ENCODE measurements at regions of chr11 and their contacts with region 1.

Region 1: GRCh38 chr11:59753650-59754493 is 1.3 kb upstream of the STX3 start:
- DNase-seq: peak; percentile 68
- ATAC-seq: peak; percentile 72
- H3K4me3 ChIP-seq: peak overlapping the region; percentile 77 to 93 (median 87)
- H3K27ac ChIP-seq: no peak overlapping the region
- H3K4me1 ChIP-seq: peaks cover 37% of the 10 kb centered on the region
- H3K27me3 ChIP-seq: no peaks in the 10 kb centered on the region; a peak in 1 of 5 replicates
- CTCF ChIP-seq: peak; percentile 91
- EP300 ChIP-seq: no peak
- POLR2A ChIP-seq: no peak
- RAD21 ChIP-seq: peak; percentile 81

Region 2: DNA sequence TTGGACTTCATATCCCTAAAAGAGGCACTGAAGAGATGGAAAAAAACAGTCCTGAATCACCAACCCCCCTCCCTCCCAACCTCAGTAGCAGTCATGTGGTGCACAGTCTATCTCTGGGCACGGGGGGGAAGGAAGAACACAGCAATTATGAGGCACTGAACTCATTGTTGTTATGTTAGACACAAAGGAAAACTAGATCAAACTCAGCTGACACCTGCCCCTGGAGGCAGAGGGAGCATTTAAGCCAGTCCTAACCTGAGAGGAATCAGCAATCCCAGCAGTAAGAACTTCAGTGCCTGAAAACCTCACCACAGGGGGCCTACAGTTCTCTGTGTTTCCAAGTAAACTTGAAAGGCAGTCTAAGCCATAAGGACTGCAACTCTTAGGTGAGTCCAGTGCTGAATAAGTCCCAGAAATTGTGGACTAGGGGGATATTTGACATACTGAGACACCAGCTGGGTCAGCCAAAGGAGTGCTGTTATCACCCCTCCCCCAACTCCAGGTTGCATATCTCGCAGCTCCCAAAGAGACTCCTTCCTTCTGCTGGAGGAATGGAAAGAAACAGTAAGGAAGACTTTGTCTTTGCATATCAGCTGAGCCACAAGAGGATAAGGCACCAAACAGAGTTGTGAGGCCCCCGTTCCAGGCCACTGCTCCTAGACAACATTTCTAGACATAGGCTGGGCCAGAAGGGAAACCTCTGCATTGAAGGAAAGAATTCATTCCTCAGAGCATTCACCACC is 742.0 kb before region 1 on chr11:
- CTCF ChIA-PET with region 1: no interaction called
- POLR2A ChIA-PET with region 1: no interaction called
- in situ Hi-C with region 1: no loop called
- intact Hi-C with region 1: no loop called
- DNase-seq: no peak
- ATAC-seq: no peak
- H3K4me3 ChIP-seq: no peak overlapping the region
- H3K27ac ChIP-seq: no peak overlapping the region
- H3K4me1 ChIP-seq: no peaks in the 10 kb centered on the region
- H3K27me3 ChIP-seq: no peaks in the 10 kb centered on the region; a peak in 1 of 5 replicates
- CTCF ChIP-seq: no peak
- EP300 ChIP-seq: no peak
- POLR2A ChIP-seq: no peak
- RAD21 ChIP-seq: no peak

Region 3: DNA sequence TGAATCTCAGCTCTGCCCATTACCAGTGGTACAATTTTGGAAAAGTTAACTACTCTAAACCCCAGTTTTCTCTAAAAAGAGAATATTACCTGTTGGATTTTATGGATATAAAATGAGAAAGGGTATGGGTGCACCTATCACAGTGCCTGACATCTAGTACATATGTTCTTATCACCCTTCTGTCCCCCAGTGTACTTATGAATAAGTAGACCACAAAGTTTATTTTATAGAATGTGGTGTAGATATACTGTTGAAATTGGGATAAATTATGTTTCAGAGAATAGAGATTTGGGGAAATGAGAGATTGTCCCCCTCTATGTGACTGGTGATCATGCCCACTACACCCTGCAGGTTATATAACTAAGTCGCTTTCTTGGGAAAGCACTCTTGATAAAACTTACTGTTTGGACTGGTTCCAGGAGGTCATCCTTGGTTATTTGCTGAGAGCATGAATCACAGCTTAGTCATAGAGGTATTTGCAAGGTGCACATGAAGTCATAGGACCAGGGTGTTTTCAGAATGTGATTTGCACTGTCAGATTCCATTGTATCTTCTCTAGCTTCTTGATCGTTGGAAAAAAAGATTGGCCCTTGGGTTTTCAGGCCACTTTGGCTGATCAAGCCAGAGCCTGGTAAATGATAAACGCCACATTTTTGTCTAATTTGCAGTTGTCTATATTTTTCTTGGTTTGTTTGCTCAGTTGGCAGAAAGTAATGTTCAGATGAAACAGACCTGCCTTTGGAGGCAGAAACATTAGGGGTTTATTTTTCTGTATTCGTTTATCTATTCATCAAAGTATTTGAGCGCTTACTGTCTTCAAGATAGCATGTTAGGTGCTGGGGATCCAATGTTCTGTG is 22.6 kb after region 1 on chr11:
- CTCF ChIA-PET with region 1: no interaction called
- POLR2A ChIA-PET with region 1: interaction called, 28 read pairs
- in situ Hi-C with region 1: no loop called
- intact Hi-C with region 1: no loop called
- DNase-seq: peak; percentile 90
- ATAC-seq: peak; percentile 88
- H3K4me3 ChIP-seq: no peak overlapping the region
- H3K27ac ChIP-seq: no peak overlapping the region
- H3K4me1 ChIP-seq: peaks cover 29% of the 10 kb centered on the region
- H3K27me3 ChIP-seq: no peaks in the 10 kb centered on the region
- CTCF ChIP-seq: no peak
- EP300 ChIP-seq: peak in 1 of 2 experiments; percentile 75; a peak in 2 of 4 replicates
- POLR2A ChIP-seq: no peak
- RAD21 ChIP-seq: no peak

Region 4: DNA sequence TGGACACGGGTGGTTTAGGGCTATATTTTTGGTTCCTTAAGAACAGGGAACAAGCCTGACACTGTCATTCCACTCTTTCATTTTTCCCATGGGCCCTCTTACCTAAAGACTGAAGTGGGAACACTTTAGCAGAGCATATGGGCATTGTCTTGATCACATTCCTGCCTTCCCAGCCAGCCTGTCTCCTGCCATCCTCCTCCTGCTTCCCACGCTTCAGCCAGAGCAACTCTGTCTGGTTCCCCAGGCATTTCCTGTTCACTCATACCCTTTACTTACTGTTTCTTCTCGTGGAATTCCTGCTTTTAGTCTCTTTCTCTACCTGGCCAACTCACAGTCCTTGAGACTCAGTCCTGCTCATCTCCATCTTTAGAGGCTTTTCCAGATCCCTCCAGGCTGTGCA is 33.9 kb after region 1 on chr11:
- CTCF ChIA-PET with region 1: no interaction called
- POLR2A ChIA-PET with region 1: interaction called, 9 read pairs
- in situ Hi-C with region 1: no loop called
- intact Hi-C with region 1: loop called (anchors 5 kb)
- DNase-seq: no peak
- ATAC-seq: no peak
- H3K4me3 ChIP-seq: no peak overlapping the region
- H3K27ac ChIP-seq: no peak overlapping the region
- H3K4me1 ChIP-seq: peaks cover 15% of the 10 kb centered on the region
- H3K27me3 ChIP-seq: no peaks in the 10 kb centered on the region
- CTCF ChIP-seq: no peak
- EP300 ChIP-seq: no peak
- POLR2A ChIP-seq: no peak
- RAD21 ChIP-seq: no peak

Region 5: DNA sequence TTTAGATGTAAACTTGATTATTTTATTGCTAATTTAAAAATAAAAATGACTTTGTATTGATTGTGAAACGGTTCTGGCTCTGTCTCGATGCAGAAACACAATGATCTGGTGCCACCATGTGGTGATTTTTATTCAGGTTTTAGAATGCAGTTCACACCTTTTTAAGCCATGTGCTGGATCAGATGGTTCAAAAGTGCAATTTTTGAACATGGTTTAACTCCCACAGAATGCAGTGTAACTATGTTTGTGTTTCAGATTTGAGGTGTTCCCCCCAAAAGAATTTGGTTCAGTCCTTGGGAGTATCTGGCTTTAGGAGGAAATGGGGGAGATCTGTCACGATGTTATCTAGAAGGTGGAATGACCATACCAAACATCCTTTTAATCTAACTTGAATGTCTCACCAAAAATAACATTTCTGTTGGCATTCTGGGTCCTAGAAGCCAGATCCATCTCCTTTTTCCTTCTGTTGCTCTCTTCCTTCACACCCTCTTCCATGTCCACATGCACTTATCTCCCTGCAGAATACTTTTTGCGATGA is 48.8 kb after region 1 on chr11:
- CTCF ChIA-PET with region 1: interaction called, 44 read pairs
- POLR2A ChIA-PET with region 1: interaction called, 4 read pairs
- in situ Hi-C with region 1: loop called (anchors 5 kb)
- intact Hi-C with region 1: loop called (anchors 1 kb)
- DNase-seq: peak; percentile 51
- ATAC-seq: peak; percentile 76
- H3K4me3 ChIP-seq: no peak overlapping the region
- H3K27ac ChIP-seq: no peak overlapping the region
- H3K4me1 ChIP-seq: peaks cover 11% of the 10 kb centered on the region
- H3K27me3 ChIP-seq: no peaks in the 10 kb centered on the region
- CTCF ChIP-seq: peak; percentile 77
- EP300 ChIP-seq: no peak
- POLR2A ChIP-seq: no peak
- RAD21 ChIP-seq: peak; percentile 77

Region 6: DNA sequence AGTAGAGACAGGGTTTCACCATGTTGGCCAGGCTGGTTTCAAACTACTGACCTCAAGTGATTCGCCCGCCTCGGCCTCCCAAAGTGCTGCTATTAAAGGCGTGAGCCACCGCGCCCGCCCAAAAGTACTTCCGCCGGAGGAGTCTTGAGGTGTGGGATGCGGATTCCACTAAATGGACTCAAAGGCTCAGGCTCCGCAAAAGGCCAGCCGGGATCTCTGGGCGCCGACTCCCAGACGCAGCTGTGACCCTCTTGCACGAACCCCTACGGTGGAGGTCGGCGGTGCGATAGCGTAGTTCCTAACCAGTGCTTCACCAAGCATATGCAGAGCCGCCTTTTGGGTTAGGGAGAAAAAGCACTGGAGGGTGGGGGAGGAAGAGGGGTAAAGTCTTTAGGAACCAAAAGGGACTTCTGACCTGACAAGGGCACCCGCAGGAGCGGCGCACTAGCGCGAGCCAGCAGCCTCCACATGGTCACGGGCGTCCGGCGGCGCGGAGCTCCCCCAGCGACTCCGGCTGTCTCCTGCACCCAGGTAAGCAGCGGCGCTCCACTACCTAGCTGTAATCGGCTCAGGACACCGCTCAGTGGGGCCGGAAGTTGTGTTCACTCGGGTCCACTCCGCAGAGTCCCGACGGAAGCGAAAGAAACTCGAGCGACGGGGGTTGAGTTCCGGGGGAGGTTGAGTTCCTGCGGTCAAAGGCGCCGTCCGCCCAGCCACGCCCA is 56.5 kb after region 1 on chr11 and contains the start of gene MRPL16:
- CTCF ChIA-PET with region 1: interaction called, 7 read pairs
- POLR2A ChIA-PET with region 1: interaction called, 22 read pairs
- in situ Hi-C with region 1: no loop called
- intact Hi-C with region 1: loop called (anchors 2 kb)
- DNase-seq: peak; percentile 87
- ATAC-seq: peak; percentile 100
- H3K4me3 ChIP-seq: peak within 1 kb of the TSS; percentile 75 to 85 (median 76)
- H3K27ac ChIP-seq: peak within 1 kb of the TSS; percentile 81
- H3K4me1 ChIP-seq: peaks cover 48% of the 10 kb centered on the region
- H3K27me3 ChIP-seq: no peaks in the 10 kb centered on the region
- CTCF ChIP-seq: peak; percentile 61
- EP300 ChIP-seq: peak in 1 of 2 experiments; percentile 27; a peak in 1 of 4 replicates
- POLR2A ChIP-seq: peak; percentile 87 to 92
- RAD21 ChIP-seq: no peak; the same call in 1 of the 2 replicates
- total RNA-seq, gene MRPL16: 62.6 and 77.8 TPM in 2 replicates

Region 7: GRCh38 chr11:60130496-60130895 is 376.6 kb after region 1 on chr11:
- CTCF ChIA-PET with region 1: no interaction called
- POLR2A ChIA-PET with region 1: no interaction called
- in situ Hi-C with region 1: no loop called
- intact Hi-C with region 1: loop called (anchors 2 kb)
- DNase-seq: peak; percentile 55
- ATAC-seq: peak; percentile 96
- H3K4me3 ChIP-seq: no peak overlapping the region
- H3K27ac ChIP-seq: no peak overlapping the region
- H3K4me1 ChIP-seq: peaks cover 16% of the 10 kb centered on the region
- H3K27me3 ChIP-seq: no peaks in the 10 kb centered on the region
- CTCF ChIP-seq: peak; percentile 81
- EP300 ChIP-seq: no peak
- POLR2A ChIP-seq: no peak
- RAD21 ChIP-seq: peak; percentile 59